GM10248 (cell line): ENCODE measurements at regions of chr20 and their contacts with region 1.

Region 1: GRCh38 chr20:10476319-10476724 is 41.2 kb downstream of the SLX4IP start:
- DNase-seq: peak; percentile 51
- CTCF ChIP-seq: peak; percentile 51

Region 2: DNA sequence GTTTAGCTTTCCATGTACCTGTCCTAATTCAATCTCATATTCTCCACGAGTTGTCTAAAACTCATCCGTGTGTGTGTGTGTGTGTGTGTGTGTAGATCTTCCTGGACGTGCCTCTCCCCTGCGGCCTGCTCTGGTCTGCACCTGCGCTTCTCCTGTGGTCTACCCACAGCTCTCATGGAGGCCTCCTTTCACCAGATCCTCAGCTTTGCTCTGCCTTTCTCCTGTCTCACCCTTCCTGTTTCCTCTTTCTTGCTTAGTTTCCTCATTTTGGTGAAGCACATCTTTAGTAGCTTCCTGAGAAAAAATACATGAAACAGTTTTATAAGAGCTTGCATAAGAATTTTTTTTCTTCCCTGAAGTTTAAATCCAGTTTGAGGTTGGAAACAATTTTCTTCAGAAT is 23.1 kb before region 1 on chr20:
- CTCF ChIA-PET with region 1: interaction called, 15 read pairs
- POLR2A ChIA-PET with region 1: no interaction called
- DNase-seq: peak; percentile 41
- CTCF ChIP-seq: no peak

Region 3: DNA sequence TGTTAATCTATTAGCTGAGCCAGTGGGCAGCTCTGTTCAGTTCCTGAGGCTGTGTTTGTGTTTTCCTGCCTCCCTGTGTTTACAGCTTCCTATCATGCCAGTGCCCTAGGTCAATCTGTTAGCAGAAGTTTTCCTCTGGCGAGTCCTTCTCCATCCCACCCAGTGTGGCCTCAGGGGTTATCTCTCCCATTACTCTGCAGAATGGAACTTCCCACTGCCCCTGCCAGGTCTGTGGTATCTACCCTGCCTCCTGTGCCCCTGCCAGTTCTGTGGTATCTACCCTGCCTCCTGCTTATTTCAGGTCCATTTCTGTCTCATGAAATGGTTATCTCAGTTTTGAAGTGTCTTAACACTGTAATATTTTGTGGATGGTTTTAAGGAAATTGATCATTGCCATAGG is 21.9 kb after region 1 on chr20:
- CTCF ChIA-PET with region 1: interaction called, 11 read pairs
- POLR2A ChIA-PET with region 1: no interaction called
- DNase-seq: no peak
- CTCF ChIP-seq: no peak

Region 4: DNA sequence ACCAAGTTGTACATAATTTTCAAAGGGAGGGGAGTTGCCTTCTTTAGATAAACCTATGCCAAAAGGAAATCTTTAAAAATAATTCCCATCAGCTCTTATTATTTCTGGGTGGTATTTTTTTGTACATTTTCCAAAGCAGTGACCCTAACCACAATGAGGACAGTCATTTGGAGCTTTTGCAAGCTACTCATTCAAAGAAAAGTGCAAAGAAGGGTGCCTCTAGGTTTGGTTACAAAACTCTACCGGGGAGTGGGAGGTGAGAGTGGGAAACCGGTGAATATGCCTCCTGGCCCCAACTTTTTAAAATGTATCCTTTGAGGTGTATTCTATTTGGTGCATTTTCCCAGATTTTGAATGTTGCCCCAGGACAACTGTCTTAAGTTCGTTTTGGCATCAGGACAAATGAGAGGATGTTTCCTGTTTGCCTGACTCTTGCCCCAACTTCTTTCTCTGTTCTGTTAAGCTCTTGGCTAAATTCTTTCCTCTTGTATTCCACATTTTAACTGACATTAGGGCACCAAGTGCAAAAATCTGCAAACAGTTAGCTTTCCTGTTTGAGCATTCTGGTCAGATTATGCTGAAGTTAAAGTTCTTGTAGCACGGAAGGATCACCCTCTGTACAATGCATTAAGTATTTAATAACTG is 37.7 kb after region 1 on chr20:
- CTCF ChIA-PET with region 1: interaction called, 22 read pairs
- POLR2A ChIA-PET with region 1: interaction called, 4 read pairs
- DNase-seq: no peak
- CTCF ChIP-seq: no peak

Region 5: DNA sequence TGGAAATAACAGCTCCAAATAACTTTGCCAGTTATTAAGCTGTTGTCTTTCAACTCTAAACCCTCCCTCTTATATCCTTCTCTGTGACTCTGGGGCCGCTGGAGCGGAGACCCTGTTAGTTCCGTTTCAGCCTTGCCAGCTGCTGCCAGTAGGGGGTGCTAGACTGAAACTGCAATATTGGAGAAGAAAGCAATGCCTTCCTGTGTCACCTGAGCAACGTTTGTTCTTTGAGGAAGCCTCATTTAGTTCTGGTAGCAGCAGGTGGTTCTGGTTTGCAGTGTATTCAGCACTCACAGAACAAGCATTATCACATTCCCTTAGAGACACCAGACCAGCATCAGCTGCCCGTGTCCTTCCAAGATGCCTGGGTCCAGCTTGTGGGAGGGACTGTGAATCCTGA is 220.3 kb after region 1 on chr20:
- CTCF ChIA-PET with region 1: no interaction called
- POLR2A ChIA-PET with region 1: no interaction called
- DNase-seq: peak; percentile 23
- CTCF ChIP-seq: peak; percentile 51